CD4-positive, alpha-beta memory T cell (primary cell): ENCODE measurements at regions of chr14 and their contacts with region 1.

Region 1: GRCh38 chr14:68911594-68912227 is 67.4 kb downstream of the ACTN1 start:
- DNase-seq: peak; percentile 70 to 76 (median 73)
- H3K4me3 ChIP-seq: no peak overlapping the region
- H3K4me3 Mint-ChIP-seq: no peak overlapping the region
- H3K27ac ChIP-seq: no peak overlapping the region
- H3K27ac Mint-ChIP-seq: peak overlapping the region in 3 of 7 donors; percentile 35 to 64 (median 43)
- H3K4me1 ChIP-seq: peaks cover 6% of the 10 kb centered on the region
- H3K4me1 Mint-ChIP-seq: peaks cover 6 to 16% (median 9%) of the 10 kb centered on the region in 4 donors
- H3K27me3 ChIP-seq: no peaks in the 10 kb centered on the region
- H3K27me3 Mint-ChIP-seq: no peaks in the 10 kb centered on the region

Region 2: DNA sequence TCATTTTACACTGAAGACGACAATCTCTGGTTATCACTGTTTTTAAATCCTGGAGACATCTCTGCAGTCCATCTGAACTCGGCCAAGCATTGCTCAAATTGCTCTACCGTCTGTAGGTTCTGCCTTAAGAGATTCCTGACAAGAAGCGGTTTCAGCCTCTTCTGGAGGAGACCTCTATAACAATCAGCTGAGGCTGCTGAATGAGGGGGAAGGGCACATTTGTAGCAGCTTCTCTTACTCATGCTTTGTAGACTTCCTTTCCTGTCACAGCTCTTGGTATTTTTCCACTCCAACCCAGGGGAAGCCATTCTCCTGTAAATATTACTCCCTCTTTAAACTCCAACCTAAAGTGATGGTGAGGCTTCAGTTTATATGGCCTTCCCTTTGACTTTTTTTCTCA is 1289.0 kb before region 1 on chr14:
- CTCF ChIA-PET with region 1: no interaction called
- POLR2A ChIA-PET with region 1: no interaction called
- intact Hi-C with region 1: no loop called
- DNase-seq: no peak
- H3K4me3 ChIP-seq: no peak overlapping the region
- H3K4me3 Mint-ChIP-seq: no peak overlapping the region
- H3K27ac ChIP-seq: no peak overlapping the region
- H3K27ac Mint-ChIP-seq: no peak overlapping the region
- H3K4me1 ChIP-seq: peaks cover 15% of the 10 kb centered on the region
- H3K4me1 Mint-ChIP-seq: peaks cover 7 to 25% (median 21%) of the 10 kb centered on the region in 4 donors
- H3K27me3 ChIP-seq: peaks cover 4% of the 10 kb centered on the region
- H3K27me3 Mint-ChIP-seq: peaks cover 2 to 7% of the 10 kb centered on the region in 2 donors

Region 3: GRCh38 chr14:68926236-68926635 is 14.5 kb after region 1 on chr14:
- CTCF ChIA-PET with region 1: interaction called, 11 read pairs
- POLR2A ChIA-PET with region 1: no interaction called
- intact Hi-C with region 1: no loop called
- DNase-seq: no peak
- H3K4me3 ChIP-seq: no peak overlapping the region
- H3K4me3 Mint-ChIP-seq: no peak overlapping the region
- H3K27ac ChIP-seq: no peak overlapping the region
- H3K27ac Mint-ChIP-seq: peak overlapping the region in 1 of 7 donors; percentile 39
- H3K4me1 ChIP-seq: no peaks in the 10 kb centered on the region
- H3K4me1 Mint-ChIP-seq: peaks cover 10 to 26% (median 18%) of the 10 kb centered on the region in 4 donors
- H3K27me3 ChIP-seq: no peaks in the 10 kb centered on the region
- H3K27me3 Mint-ChIP-seq: no peaks in the 10 kb centered on the region

Region 4: GRCh38 chr14:68979021-68979782 is 67.5 kb after region 1 on chr14 and contains the start of gene ACTN1:
- CTCF ChIA-PET with region 1: interaction called, 6 read pairs
- POLR2A ChIA-PET with region 1: interaction called, 4 read pairs
- intact Hi-C with region 1: loop called (anchors 1 kb)
- DNase-seq: peak; percentile 46 to 66 (median 50)
- H3K4me3 ChIP-seq: peak within 1 kb of the TSS; percentile 52 to 77
- H3K4me3 Mint-ChIP-seq: peak within 1 kb of the TSS; percentile 92 to 95 (median 94)
- H3K27ac ChIP-seq: peak within 1 kb of the TSS; percentile 42
- H3K27ac Mint-ChIP-seq: peak within 1 kb of the TSS; percentile 75 to 94 (median 89)
- H3K4me1 ChIP-seq: peaks cover 27% of the 10 kb centered on the region
- H3K4me1 Mint-ChIP-seq: peaks cover 27 to 41% (median 35%) of the 10 kb centered on the region in 4 donors
- H3K27me3 ChIP-seq: no peaks in the 10 kb centered on the region
- H3K27me3 Mint-ChIP-seq: no peaks in the 10 kb centered on the region
- total RNA-seq, gene ACTN1: 70.8 to 75.1 TPM

Region 5: GRCh38 chr14:69005432-69006147 is 93.9 kb after region 1 on chr14:
- CTCF ChIA-PET with region 1: interaction called, 72 read pairs
- POLR2A ChIA-PET with region 1: no interaction called
- intact Hi-C with region 1: loop called (anchors 1 kb)
- DNase-seq: no peak
- H3K4me3 ChIP-seq: no peak overlapping the region
- H3K4me3 Mint-ChIP-seq: no peak overlapping the region
- H3K27ac ChIP-seq: no peak overlapping the region
- H3K27ac Mint-ChIP-seq: peak overlapping the region in 2 of 7 donors; percentile 51 to 83
- H3K4me1 ChIP-seq: no peaks in the 10 kb centered on the region
- H3K4me1 Mint-ChIP-seq: peaks cover 0 to 6% (median 2%) of the 10 kb centered on the region in 4 donors
- H3K27me3 ChIP-seq: no peaks in the 10 kb centered on the region
- H3K27me3 Mint-ChIP-seq: peaks cover 0 to 1% of the 10 kb centered on the region in 2 donors

Region 6: DNA sequence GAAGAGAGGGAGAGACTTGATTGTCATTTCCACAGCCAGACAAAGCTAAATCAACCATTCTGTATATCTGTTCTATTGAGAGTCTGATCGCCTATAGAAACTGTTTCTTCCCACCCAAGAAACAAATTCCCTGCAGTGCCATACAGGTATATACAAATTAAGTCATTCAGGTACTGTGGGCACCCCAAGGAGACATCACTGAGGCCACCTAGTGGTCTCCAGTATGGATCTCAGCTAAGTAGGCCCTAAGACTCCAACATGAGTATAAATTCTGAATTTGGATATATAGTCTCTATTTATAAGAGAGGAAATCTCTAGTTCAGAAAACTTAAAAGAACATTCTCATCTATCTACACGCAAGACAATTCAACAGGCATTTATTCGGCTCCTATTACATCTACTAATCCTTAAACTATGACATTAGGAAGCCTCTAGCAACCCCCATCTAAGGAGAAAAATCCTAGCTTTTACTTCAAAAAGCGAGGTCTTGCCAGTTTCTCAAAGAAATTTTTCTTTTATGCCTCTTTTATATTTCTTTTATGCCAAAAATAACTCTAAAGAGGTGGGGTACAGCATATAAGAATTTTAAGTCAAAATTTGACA is 178.6 kb after region 1 on chr14:
- CTCF ChIA-PET with region 1: interaction called, 15 read pairs
- POLR2A ChIA-PET with region 1: no interaction called
- intact Hi-C with region 1: loop called (anchors 1 kb)
- DNase-seq: peak in 4 of 5 donors; percentile 22 to 32 (median 27)
- H3K4me3 ChIP-seq: no peak overlapping the region
- H3K4me3 Mint-ChIP-seq: no peak overlapping the region
- H3K27ac ChIP-seq: no peak overlapping the region
- H3K27ac Mint-ChIP-seq: no peak overlapping the region
- H3K4me1 ChIP-seq: no peaks in the 10 kb centered on the region
- H3K4me1 Mint-ChIP-seq: peaks cover 4 to 10% (median 6%) of the 10 kb centered on the region in 4 donors
- H3K27me3 ChIP-seq: no peaks in the 10 kb centered on the region
- H3K27me3 Mint-ChIP-seq: no peaks in the 10 kb centered on the region

Region 7: GRCh38 chr14:69107407-69108003 is 195.8 kb after region 1 on chr14:
- CTCF ChIA-PET with region 1: interaction called, 48 read pairs
- POLR2A ChIA-PET with region 1: no interaction called
- intact Hi-C with region 1: no loop called
- DNase-seq: peak in 4 of 5 donors; percentile 40 to 51 (median 47)
- H3K4me3 ChIP-seq: no peak overlapping the region
- H3K4me3 Mint-ChIP-seq: no peak overlapping the region
- H3K27ac ChIP-seq: no peak overlapping the region
- H3K27ac Mint-ChIP-seq: no peak overlapping the region
- H3K4me1 ChIP-seq: no peaks in the 10 kb centered on the region
- H3K4me1 Mint-ChIP-seq: peaks cover 0 to 5% (median 2%) of the 10 kb centered on the region in 4 donors
- H3K27me3 ChIP-seq: no peaks in the 10 kb centered on the region
- H3K27me3 Mint-ChIP-seq: no peaks in the 10 kb centered on the region

Region 8: GRCh38 chr14:69572030-69572840 is 660.5 kb after region 1 on chr14:
- CTCF ChIA-PET with region 1: no interaction called
- POLR2A ChIA-PET with region 1: no interaction called
- intact Hi-C with region 1: no loop called
- DNase-seq: no peak
- H3K4me3 ChIP-seq: no peak overlapping the region
- H3K4me3 Mint-ChIP-seq: peak overlapping the region in 5 of 8 donors; percentile 21 to 67 (median 42)
- H3K27ac ChIP-seq: no peak overlapping the region
- H3K27ac Mint-ChIP-seq: no peak overlapping the region
- H3K4me1 ChIP-seq: peaks cover 13% of the 10 kb centered on the region
- H3K4me1 Mint-ChIP-seq: peaks cover 6 to 29% (median 11%) of the 10 kb centered on the region in 4 donors
- H3K27me3 ChIP-seq: peaks cover 23% of the 10 kb centered on the region
- H3K27me3 Mint-ChIP-seq: peaks cover 39 to 47% of the 10 kb centered on the region in 2 donors

Region 9: DNA sequence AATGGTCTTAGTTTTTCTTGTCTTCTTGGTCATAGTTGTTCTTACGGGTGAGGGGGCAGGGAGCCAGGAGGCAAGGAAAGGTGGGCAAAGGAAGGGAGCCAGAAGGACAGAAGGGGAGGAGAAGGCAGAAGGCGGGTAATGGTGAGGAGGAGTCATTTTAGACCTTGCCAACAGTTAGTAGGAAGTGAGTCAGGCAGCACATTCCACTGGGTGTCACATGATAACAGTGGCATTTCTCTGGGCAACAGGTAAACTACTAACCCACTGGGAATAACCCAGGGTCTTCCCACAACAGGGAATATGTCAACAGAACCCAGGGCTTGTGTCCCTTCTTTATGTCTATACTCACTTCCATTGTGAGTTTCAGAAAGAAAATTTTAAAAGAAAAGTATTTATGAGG is 1149.4 kb after region 1 on chr14:
- CTCF ChIA-PET with region 1: no interaction called
- POLR2A ChIA-PET with region 1: no interaction called
- intact Hi-C with region 1: no loop called
- DNase-seq: no peak
- H3K4me3 ChIP-seq: no peak overlapping the region
- H3K4me3 Mint-ChIP-seq: peak overlapping the region in 1 of 8 donors; percentile 1
- H3K27ac ChIP-seq: no peak overlapping the region
- H3K27ac Mint-ChIP-seq: no peak overlapping the region
- H3K4me1 ChIP-seq: no peaks in the 10 kb centered on the region
- H3K4me1 Mint-ChIP-seq: no peaks in the 10 kb centered on the region
- H3K27me3 ChIP-seq: no peaks in the 10 kb centered on the region
- H3K27me3 Mint-ChIP-seq: peaks cover 17 to 36% of the 10 kb centered on the region in 2 donors